Gastrocnemius medialis (tissue), 4 donors: ENCODE measurements at regions of chr19 and their contacts with region 1.

Region 1: DNA sequence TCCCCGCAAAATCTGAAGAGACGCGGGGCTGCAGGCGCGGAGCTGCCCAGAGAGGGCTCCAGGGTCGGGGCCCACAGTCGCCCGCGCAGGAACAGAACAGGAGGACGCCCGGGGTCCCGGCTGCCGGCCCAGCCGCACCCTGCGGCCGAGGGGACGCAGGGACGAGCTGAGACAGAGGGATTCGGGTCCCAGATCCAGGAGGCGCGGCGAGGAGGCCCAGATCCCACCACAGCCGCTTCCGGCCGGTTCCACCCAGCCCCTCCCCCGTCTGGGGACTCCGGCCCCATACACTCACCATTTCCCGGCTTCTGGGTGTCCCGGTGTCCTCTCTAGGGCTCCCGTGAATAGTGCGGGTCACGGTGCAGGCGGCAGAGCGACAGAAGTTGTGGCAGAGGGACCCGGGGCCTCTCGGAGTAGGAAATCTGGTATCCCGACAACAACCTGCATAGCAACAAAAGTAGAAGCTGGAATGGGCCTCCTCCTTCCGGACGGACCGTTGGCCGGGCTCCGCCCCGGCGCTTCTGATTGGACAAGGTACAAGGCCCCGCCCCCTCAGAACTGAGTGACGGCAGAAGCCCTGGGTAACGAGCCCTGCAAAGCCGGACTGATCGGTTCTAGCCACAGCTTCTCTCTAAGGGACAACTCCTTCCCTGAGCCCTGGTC is at the start of gene ZNF20:
- DNase-seq: peak; percentile 88 to 91
- ATAC-seq: peak; percentile 97 to 98
- H3K4me3 ChIP-seq: peak within 1 kb of the TSS; percentile 84 to 96 (median 90)
- H3K27ac ChIP-seq: peak within 1 kb of the TSS; percentile 74 to 81 (median 78)
- H3K4me1 ChIP-seq: peaks cover 4 to 16% of the 10 kb centered on the region in 2 donors
- H3K27me3 ChIP-seq: no peaks in the 10 kb centered on the region
- CTCF ChIP-seq: peak in 1 of 5 experiments; percentile 7
- POLR2A ChIP-seq: peak in 1 of 2 donors; percentile 26
- total RNA-seq, gene ZNF20: 0.29 to 0.78 (median 0.41) TPM in 3 of 4 donors, not detected in the other

Region 2: DNA sequence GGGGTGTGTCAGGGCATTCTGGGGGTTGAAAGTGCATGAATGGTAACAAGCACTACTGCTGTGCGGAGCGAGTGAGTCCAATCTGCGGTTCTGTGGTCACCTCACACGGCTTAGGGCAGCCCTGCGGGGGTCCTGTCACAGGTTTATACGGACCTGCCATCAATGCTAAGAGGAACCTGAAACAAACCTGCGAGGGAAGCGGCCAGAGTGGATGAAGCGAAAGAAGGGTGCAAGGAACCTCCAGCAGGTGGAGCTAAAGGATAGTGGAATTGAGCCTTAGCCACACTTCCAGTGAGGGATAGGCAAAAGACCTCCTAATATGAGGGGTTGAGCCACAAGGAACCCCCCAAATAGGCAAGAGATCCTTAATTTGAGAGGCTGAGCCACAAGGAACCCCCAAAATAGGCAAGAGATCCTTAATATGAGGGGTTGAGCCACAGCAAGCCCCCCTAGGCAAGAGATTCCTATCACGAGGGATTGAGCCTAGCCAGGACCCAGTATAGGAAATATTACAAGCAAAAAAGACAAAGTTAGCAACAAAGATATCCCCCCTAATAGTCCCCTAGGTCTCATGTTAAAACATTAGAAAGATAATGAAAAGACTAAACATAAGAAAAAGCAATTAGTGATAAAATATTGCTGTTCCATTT is 258.7 kb before region 1 on chr19:
- in situ Hi-C with region 1: loop called in 1 of 4 experiments (anchors 10 kb)
- intact Hi-C with region 1: loop called (anchors 1 kb)
- DNase-seq: peak; percentile 3 to 21
- ATAC-seq: peak in 1 of 2 donors; percentile 69
- H3K4me3 ChIP-seq: no peak overlapping the region
- H3K27ac ChIP-seq: no peak overlapping the region
- H3K4me1 ChIP-seq: no peaks in the 10 kb centered on the region
- H3K27me3 ChIP-seq: no peaks in the 10 kb centered on the region
- CTCF ChIP-seq: peak; percentile 29 to 77 (median 65)
- POLR2A ChIP-seq: no peak

Region 3: GRCh38 chr19:11924886-11925650 is 214.9 kb before region 1 on chr19 and contains the start of gene ZNF700:
- in situ Hi-C with region 1: loop called in 1 of 4 experiments (anchors 25 kb)
- intact Hi-C with region 1: loop called (anchors 1 kb)
- DNase-seq: peak; percentile 92
- ATAC-seq: peak; percentile 98 to 99
- H3K4me3 ChIP-seq: peak within 1 kb of the TSS; percentile 88 to 98 (median 88)
- H3K27ac ChIP-seq: peak within 1 kb of the TSS; percentile 89 to 94 (median 92)
- H3K4me1 ChIP-seq: peaks cover 4 to 20% of the 10 kb centered on the region in 2 donors
- H3K27me3 ChIP-seq: no peaks in the 10 kb centered on the region
- CTCF ChIP-seq: no peak
- POLR2A ChIP-seq: peak; percentile 64 to 77
- total RNA-seq, gene ZNF700: 1.3 to 5.8 (median 4.0) TPM

Region 4: DNA sequence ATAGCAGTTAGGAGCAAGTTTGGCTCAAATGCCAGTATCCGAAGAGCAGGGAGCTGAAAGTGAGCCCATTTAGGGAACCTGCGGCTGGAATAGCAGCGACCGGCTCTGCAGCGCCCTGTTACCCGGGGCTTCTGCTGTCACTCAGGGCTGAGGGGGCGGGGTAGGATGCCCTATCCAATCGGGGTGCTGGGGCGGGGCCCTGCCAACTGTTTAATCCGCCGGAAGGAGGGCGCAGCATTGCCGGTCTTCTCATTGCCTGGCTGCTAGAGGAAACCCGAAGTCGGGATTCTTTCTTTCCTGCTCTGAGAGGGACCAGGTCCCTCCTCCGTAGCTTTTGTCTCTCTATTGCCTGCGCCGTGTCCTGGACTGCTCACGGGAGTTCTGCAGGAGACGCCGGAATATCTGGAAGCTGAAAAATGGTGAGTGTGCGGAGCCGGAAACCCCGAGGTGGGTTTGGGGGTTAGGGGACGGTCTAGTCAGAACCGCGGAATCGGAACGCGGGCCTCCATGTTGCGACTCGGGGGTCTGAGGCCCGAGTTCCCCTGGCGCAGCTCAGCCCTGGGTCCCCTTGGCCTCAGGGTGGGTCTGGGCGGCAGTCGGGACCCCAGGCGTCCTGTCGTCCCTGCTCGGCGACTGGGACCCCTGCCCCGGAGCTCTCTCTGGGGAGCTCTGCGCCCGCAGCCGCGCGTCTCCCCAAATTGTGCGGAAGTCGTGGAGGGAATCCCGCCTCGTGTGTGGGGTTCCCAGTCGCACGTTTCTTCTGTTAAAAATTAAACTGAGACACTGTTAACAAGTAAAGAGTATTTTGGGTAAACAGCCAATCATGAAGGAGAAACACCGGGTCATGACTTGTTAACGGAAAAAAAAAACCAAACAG is 152.4 kb before region 1 on chr19:
- in situ Hi-C with region 1: no loop called
- intact Hi-C with region 1: loop called (anchors 2 kb)
- DNase-seq: peak; percentile 93 to 96
- ATAC-seq: peak; percentile 89 to 90
- H3K4me3 ChIP-seq: peak overlapping the region; percentile 73 to 94 (median 91)
- H3K27ac ChIP-seq: peak overlapping the region; percentile 87 to 96 (median 94)
- H3K4me1 ChIP-seq: peaks cover 0 to 6% of the 10 kb centered on the region in 2 donors
- H3K27me3 ChIP-seq: no peaks in the 10 kb centered on the region
- CTCF ChIP-seq: no peak
- POLR2A ChIP-seq: peak; percentile 74 to 83

Region 5: GRCh38 chr19:12052497-12053169 is 87.4 kb before region 1 on chr19 and contains the start of gene ZNF878:
- in situ Hi-C with region 1: loop called in 3 of 4 experiments (anchors 5 to 10 kb)
- intact Hi-C with region 1: no loop called
- DNase-seq: peak; percentile 70 to 72
- ATAC-seq: peak; percentile 92 to 93
- H3K4me3 ChIP-seq: peak within 1 kb of the TSS; percentile 56 to 92 (median 62)
- H3K27ac ChIP-seq: peak within 1 kb of the TSS in 3 of 4 donors; percentile 22 to 64 (median 43)
- H3K4me1 ChIP-seq: no peaks in the 10 kb centered on the region
- H3K27me3 ChIP-seq: peaks cover 0 to 14% (median 10%) of the 10 kb centered on the region in 3 donors
- CTCF ChIP-seq: no peak
- POLR2A ChIP-seq: peak; percentile 41 to 76
- total RNA-seq, gene ZNF878: not detected

Region 6: DNA sequence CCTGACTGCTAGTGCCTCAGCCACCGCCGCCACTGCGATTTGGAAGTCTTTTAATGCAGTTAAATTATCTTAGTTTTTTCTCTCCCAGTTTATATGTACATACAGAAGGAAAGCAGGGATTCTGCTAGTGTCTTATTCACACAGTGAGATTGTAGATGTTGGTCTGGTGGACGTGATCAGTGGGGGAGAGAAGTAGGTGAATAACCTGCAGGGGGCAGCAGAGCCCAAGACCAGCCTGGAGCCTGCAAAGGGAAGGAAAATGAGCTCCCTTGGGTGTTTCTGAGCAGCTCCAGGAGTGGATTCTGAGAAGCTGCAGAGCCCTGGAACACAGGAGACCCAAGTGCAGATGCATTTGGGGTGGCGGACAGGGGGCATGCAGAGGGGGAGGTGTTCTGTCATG is 49.2 kb before region 1 on chr19:
- in situ Hi-C with region 1: no loop called
- intact Hi-C with region 1: loop called (anchors 2 kb)
- DNase-seq: peak in 1 of 2 donors; percentile 19
- ATAC-seq: no peak
- H3K4me3 ChIP-seq: no peak overlapping the region
- H3K27ac ChIP-seq: no peak overlapping the region
- H3K4me1 ChIP-seq: no peaks in the 10 kb centered on the region
- H3K27me3 ChIP-seq: no peaks in the 10 kb centered on the region
- CTCF ChIP-seq: peak in 4 of 5 experiments; percentile 8 to 61 (median 36)
- POLR2A ChIP-seq: no peak

Region 7: DNA sequence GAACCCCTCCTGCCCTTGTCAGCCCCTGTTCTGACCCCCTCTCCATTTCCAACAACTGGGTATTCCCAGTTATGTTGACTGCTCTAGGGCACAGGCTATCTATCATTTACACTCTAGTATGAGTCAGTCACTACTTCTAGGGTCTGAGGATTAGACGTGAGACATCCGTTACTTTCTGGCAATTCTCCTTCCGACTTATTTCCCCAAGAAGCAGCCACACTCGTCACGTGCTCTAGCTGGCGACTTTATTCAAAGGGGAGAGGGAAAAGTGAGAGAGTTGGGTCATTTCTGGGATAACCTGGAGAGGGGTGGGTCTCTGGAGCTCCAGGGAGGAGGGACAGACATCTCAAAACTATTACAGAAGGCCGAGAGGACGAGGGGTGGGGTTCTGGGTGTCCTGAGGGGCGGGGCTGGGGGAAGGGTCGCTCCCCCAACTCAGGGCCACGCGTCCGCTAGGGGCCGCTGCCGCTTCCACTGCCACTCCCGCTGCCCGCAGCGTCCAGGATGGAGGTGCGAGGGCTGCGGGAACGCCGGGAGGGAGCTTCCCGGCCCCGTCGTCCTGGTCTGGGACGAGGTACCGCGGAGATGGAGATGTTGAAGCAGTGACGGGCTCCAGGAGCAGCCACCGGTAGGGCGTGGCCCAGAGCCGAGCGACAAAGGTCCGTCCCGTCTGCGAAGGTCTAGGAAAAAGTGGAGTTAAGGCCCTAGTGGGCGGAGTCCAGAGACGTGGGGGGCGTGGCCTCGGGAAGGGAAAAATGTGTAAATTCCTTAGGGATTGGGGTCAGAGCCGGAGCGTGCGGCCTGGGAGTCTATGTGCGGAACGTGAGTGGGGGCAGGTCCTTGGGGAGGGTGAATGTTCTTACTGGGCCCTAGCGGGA is 685.5 kb after region 1 on chr19:
- in situ Hi-C with region 1: no loop called
- intact Hi-C with region 1: no loop called
- DNase-seq: no peak
- ATAC-seq: no peak
- H3K4me3 ChIP-seq: no peak overlapping the region
- H3K27ac ChIP-seq: no peak overlapping the region
- H3K4me1 ChIP-seq: no peaks in the 10 kb centered on the region
- H3K27me3 ChIP-seq: peaks cover 55 to 68% (median 62%) of the 10 kb centered on the region in 3 donors
- CTCF ChIP-seq: no peak
- POLR2A ChIP-seq: no peak